ENCODE measurements at regions of chr10 and their contacts with region 1.

Region 1: DNA sequence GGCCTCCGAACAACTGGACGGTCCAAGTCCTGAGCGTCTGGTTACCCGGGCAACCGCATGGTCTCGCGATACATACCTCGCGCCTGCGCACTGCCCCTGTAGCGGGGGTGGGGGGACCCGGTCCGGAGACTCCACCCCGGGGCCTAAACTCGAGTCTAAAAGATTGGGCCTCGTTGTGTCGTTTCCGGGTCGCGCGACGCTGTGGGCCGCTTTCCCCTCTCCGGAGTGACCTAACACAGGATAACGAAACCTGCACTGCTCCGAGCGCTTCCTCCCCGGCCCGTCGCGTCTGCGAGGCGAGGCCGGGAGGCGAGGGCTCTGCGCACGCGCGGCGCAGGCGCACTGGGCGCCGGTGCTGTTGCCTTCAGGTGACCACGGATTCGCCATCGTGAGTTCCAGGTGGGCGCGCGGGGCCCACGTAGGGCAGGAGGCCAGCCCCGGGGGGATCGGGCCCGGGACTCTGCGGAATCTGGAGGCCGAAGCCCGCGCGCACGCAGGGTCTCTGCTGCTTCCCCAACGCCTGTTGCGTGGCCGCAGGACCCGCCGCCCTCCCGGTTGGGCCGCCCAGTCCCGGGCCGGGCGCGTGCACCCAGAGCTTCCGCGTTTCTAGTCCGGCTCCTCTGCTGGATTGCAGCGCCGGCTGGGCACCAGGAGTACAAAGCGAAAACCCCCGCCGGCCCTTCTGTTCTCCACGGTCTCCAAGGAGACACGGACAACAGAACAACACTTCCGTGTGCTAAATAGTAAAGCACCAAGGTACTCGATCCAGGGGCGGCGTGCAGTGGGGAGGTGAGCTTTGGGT is at the start of gene RPP38:
- DNase-seq: peak; percentile 98
- H3K4me3 ChIP-seq: peak within 1 kb of the TSS; percentile 85 to 98 (median 94)
- H3K27ac ChIP-seq: peak within 1 kb of the TSS; percentile 93 to 98 (median 96)
- H3K4me1 ChIP-seq: peaks cover 16 to 52% (median 38%) of the 10 kb centered on the region in 6 donors
- H3K27me3 ChIP-seq: no peaks in the 10 kb centered on the region
- CTCF ChIP-seq: peak in 1 of 11 experiments; percentile 28
- POLR2A ChIP-seq: peak in 1 of 3 donors; percentile 54
- total RNA-seq, gene RPP38: 12.5 to 19.7 (median 15.6) TPM

Region 2: GRCh38 chr10:14959276-14960057 is 137.7 kb before region 1 on chr10 and contains the start of gene MEIG1:
- intact Hi-C with region 1: loop called (anchors 10 kb)
- DNase-seq: peak; percentile 97
- H3K4me3 ChIP-seq: peak within 1 kb of the TSS; percentile 73 to 99 (median 94)
- H3K27ac ChIP-seq: peak within 1 kb of the TSS; percentile 89 to 96 (median 95)
- H3K4me1 ChIP-seq: peaks cover 0 to 26% (median 19%) of the 10 kb centered on the region in 6 donors
- H3K27me3 ChIP-seq: no peaks in the 10 kb centered on the region
- CTCF ChIP-seq: no peak
- POLR2A ChIP-seq: no peak
- total RNA-seq, gene MEIG1: not detected